CD4-positive, alpha-beta T cell (primary cell): ENCODE measurements at regions of chr17 and their contacts with region 1.

Region 1: DNA sequence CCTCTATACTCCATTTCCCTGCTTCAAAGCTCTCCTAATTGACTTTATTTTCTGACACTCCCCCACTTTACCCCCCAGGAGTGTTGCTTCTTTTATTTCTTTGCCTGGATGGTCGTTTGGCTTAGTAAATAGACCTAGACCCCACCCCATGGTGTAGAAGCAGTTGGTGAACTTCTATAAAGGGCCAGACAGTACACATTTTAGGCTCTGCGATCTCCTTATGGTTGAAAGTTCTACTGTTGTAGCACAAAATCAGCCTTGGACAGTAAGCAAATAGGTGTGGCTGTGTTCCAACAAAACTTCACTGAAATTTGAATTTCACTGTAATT is 31.9 kb downstream of the ZNF287 start:
- DNase-seq: peak in 1 of 14 experiments; percentile 21
- ATAC-seq: no peak
- H3K4me3 ChIP-seq: no peak overlapping the region
- H3K4me3 Mint-ChIP-seq: peak overlapping the region; percentile 93
- H3K27ac ChIP-seq: no peak overlapping the region
- H3K27ac Mint-ChIP-seq: peak overlapping the region; percentile 81
- H3K4me1 ChIP-seq: peaks cover 19% of the 10 kb centered on the region
- H3K4me1 Mint-ChIP-seq: peaks cover 13% of the 10 kb centered on the region
- H3K27me3 ChIP-seq: no peaks in the 10 kb centered on the region
- H3K27me3 Mint-ChIP-seq: no peaks in the 10 kb centered on the region
- CTCF ChIP-seq: no peak

Region 2: GRCh38 chr17:16215273-16215964 is 321.7 kb before region 1 on chr17 and contains the start of gene NCOR1:
- CTCF ChIA-PET with region 1: no interaction called
- POLR2A ChIA-PET with region 1: no interaction called
- intact Hi-C with region 1: loop called in 1 of 2 experiments (anchors 5 kb)
- DNase-seq: peak; percentile 79 to 95 (median 87)
- ATAC-seq: peak; percentile 87
- H3K4me3 ChIP-seq: peak within 1 kb of the TSS; percentile 73
- H3K4me3 Mint-ChIP-seq: peak within 1 kb of the TSS; percentile 100
- H3K27ac ChIP-seq: peak within 1 kb of the TSS; percentile 72 to 79
- H3K27ac Mint-ChIP-seq: peak within 1 kb of the TSS; percentile 99
- H3K4me1 ChIP-seq: peaks cover 36% of the 10 kb centered on the region
- H3K4me1 Mint-ChIP-seq: peaks cover 58% of the 10 kb centered on the region
- H3K27me3 ChIP-seq: no peaks in the 10 kb centered on the region
- H3K27me3 Mint-ChIP-seq: no peaks in the 10 kb centered on the region
- CTCF ChIP-seq: no peak
- total RNA-seq, gene NCOR1: 118 TPM

Region 3: DNA sequence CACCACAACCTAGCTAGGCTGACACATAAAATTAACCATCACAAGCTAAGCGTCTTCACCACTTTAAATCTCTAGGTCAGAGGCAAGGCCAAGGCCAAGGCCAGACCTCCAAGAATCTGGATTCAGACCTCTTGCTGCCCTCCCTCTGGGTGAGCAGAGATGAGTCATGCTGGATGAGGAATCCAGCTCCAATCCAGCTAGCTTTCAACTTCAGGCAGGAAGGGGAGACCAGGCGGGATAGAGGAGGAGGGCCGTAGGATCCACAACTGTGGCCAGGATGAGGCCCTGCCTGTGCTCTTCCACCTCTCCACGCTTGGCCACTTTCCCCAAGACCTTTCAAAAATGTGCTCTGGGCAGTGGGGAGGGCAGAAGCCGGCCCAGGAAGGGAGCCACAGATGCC is 59.8 kb before region 1 on chr17:
- CTCF ChIA-PET with region 1: no interaction called
- POLR2A ChIA-PET with region 1: no interaction called
- intact Hi-C with region 1: no loop called
- DNase-seq: no peak
- ATAC-seq: no peak
- H3K4me3 ChIP-seq: no peak overlapping the region
- H3K4me3 Mint-ChIP-seq: no peak overlapping the region
- H3K27ac ChIP-seq: no peak overlapping the region
- H3K27ac Mint-ChIP-seq: no peak overlapping the region
- H3K4me1 ChIP-seq: peaks cover 2% of the 10 kb centered on the region
- H3K4me1 Mint-ChIP-seq: no peaks in the 10 kb centered on the region
- H3K27me3 ChIP-seq: no peaks in the 10 kb centered on the region
- H3K27me3 Mint-ChIP-seq: no peaks in the 10 kb centered on the region
- CTCF ChIP-seq: no peak

Region 4: DNA sequence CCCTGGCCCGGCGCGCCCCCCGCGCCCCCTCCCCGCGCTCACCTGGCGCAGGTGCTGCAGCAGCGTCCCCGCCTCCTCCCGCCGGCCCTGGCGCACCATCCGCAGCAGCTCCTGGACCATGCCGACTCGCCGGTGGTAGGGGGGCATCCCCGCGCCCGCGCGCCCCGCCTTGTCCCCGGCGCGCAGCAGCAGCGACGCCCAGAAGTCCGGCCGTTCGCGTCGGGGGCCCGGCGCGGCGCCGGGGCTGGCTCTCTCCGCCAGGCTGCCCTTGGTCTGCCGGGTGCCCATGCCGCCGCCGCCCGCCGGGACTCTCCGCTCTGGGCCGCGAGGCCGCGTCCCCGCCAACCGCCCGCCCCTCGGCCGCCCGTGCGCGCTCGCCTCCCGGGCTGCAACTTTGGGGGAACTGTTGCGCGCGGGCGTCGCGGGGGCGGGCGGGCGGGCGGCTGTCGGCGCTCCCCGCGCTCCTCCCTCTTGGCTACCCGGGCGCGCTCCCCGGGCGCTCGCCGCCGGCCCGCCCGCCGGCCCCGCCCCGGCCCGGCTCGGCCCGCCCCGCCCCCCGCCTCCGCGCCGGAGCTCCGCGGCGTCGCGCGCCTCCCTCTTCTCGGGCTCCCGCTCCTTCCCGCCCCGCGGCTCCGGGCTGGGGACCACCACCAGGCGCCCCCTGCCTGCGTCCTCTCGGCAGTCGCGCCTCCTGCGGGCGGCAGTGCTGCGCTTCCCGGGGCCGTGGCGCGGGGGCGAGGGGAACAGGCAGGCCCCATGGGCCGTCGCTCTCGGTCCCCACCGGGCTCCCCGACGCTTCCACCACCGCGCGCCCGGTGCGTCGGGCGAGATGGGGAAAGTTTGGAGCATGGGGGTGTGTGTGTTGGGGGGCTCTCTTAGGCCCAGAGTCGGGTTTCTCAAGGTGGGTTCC is 45.1 kb before region 1 on chr17 and contains the start of gene LRRC75A:
- CTCF ChIA-PET with region 1: no interaction called
- POLR2A ChIA-PET with region 1: no interaction called
- intact Hi-C with region 1: loop called in 1 of 2 experiments (anchors 2 kb)
- DNase-seq: peak; percentile 17 to 83 (median 49)
- ATAC-seq: peak; percentile 87
- H3K4me3 ChIP-seq: peak within 1 kb of the TSS; percentile 51
- H3K4me3 Mint-ChIP-seq: peak within 1 kb of the TSS; percentile 89
- H3K27ac ChIP-seq: no peak within 1 kb of the TSS
- H3K27ac Mint-ChIP-seq: no peak within 1 kb of the TSS
- H3K4me1 ChIP-seq: peaks cover 17% of the 10 kb centered on the region
- H3K4me1 Mint-ChIP-seq: peaks cover 12% of the 10 kb centered on the region
- H3K27me3 ChIP-seq: peaks cover 0 to 5% of the 10 kb centered on the region in 2 experiments
- H3K27me3 Mint-ChIP-seq: no peaks in the 10 kb centered on the region
- CTCF ChIP-seq: no peak
- total RNA-seq, gene LRRC75A: 1.5 to 1.9 TPM

Region 5: DNA sequence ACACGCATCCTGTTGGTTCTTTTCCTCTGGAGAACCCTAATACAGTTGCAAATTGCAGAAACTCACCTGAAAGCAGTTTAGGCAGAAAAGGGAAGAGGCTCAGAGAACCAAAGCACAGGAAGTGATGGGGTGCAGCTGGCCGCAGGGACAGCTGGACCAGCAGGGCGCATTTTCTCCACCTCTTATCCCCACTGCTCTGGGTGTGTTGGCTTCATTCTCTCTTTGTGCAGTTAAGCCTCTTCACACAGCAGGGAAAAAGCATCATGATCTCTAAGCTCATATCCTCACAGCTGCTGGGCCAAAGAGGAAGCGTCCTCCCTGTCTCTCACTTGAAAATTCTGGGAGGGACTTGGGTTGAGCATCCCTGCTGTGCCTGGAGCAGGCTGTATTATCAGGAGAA is 25.1 kb before region 1 on chr17:
- CTCF ChIA-PET with region 1: no interaction called
- POLR2A ChIA-PET with region 1: no interaction called
- intact Hi-C with region 1: no loop called
- DNase-seq: no peak
- ATAC-seq: no peak
- H3K4me3 ChIP-seq: no peak overlapping the region
- H3K4me3 Mint-ChIP-seq: no peak overlapping the region
- H3K27ac ChIP-seq: no peak overlapping the region
- H3K27ac Mint-ChIP-seq: no peak overlapping the region
- H3K4me1 ChIP-seq: peaks cover 3% of the 10 kb centered on the region
- H3K4me1 Mint-ChIP-seq: no peaks in the 10 kb centered on the region
- H3K27me3 ChIP-seq: peaks cover 0 to 7% of the 10 kb centered on the region in 2 experiments
- H3K27me3 Mint-ChIP-seq: peaks cover 16% of the 10 kb centered on the region
- CTCF ChIP-seq: no peak

Region 6: DNA sequence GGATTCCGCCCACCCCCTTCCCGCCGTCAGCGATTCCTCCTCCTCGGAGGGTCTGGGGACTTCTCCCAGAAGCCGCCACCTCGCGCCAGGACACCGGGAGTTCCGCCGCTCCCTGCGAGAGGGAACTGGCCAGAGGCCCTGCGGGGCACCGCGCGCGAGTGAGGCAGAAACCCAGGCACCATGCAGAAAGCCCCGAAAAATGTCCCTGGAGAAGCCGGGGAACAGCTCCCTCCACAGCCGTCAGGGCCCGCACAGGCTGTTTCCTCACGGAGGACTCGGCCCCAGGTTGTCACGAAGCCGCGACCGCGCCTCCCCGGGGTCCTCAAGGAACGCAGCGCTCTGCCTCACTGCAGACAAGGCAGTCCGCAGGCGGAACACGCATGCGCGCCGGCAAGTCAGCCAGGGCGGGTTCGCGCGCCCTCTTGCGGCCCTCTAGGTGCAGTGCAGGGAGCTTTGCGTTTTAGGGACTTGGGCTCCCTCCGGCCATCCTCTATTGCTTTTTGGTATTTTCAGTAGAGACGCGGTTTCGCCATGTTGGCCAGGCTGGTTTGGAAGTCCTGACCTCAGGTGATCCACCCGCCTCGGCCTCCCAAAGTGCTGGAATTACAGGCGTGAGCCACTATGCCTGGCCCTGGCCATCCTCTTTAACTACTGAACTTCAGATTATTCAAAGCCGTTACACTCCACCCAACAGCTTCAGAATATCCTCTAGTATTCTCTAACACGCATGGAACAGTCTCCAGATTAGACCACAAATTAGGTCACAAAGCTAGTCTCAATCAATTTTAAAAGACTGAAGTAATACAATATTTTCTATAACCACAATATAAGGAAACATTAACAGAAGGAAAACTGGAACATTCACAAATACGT is 52.2 kb after region 1 on chr17:
- CTCF ChIA-PET with region 1: interaction called, 30 read pairs
- POLR2A ChIA-PET with region 1: interaction called, 19 read pairs
- intact Hi-C with region 1: loop called (anchors 1 kb)
- DNase-seq: peak; percentile 85 to 96 (median 92)
- ATAC-seq: peak; percentile 93
- H3K4me3 ChIP-seq: peak overlapping the region; percentile 63
- H3K4me3 Mint-ChIP-seq: peak overlapping the region; percentile 87
- H3K27ac ChIP-seq: no peak overlapping the region
- H3K27ac Mint-ChIP-seq: no peak overlapping the region
- H3K4me1 ChIP-seq: peaks cover 16% of the 10 kb centered on the region
- H3K4me1 Mint-ChIP-seq: peaks cover 4% of the 10 kb centered on the region
- H3K27me3 ChIP-seq: peaks cover 0 to 7% of the 10 kb centered on the region in 2 experiments
- H3K27me3 Mint-ChIP-seq: peaks cover 61% of the 10 kb centered on the region
- CTCF ChIP-seq: peak; percentile 99

Region 7: DNA sequence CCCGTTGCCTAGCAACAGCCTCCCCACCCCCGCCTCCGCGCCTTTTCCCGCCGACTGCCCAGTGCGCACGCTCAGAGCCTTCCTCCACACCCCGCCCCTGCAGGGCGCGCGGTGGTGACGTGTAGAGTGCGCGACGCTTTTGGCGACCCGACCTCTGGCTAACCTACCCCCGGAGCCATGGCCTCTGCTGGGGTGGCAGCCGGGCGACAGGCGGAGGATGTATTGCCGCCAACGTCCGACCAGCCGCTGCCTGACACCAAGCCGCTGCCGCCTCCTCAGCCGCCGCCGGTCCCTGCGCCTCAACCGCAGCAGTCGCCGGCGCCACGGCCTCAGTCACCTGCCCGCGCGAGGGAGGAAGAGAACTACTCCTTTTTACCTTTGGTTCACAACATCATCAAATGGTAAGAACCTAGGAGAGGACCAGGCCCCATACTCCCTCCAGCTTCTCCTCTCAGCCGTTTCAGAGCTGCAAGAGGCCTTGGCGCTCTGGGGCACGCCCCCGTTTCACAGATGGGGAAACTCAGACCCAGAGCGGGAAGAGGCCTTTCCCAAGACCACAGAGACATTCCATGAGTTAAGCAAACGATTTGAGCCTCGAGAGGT is 939.9 kb after region 1 on chr17 and contains the start of gene MED9:
- CTCF ChIA-PET with region 1: no interaction called
- POLR2A ChIA-PET with region 1: no interaction called
- intact Hi-C with region 1: loop called in 1 of 2 experiments (anchors 5 kb)
- DNase-seq: peak; percentile 92 to 98 (median 94)
- ATAC-seq: peak; percentile 98
- H3K4me3 ChIP-seq: peak within 1 kb of the TSS; percentile 82
- H3K4me3 Mint-ChIP-seq: peak within 1 kb of the TSS; percentile 91
- H3K27ac ChIP-seq: peak within 1 kb of the TSS; percentile 42 to 58
- H3K27ac Mint-ChIP-seq: peak within 1 kb of the TSS; percentile 87
- H3K4me1 ChIP-seq: peaks cover 42% of the 10 kb centered on the region
- H3K4me1 Mint-ChIP-seq: peaks cover 51% of the 10 kb centered on the region
- H3K27me3 ChIP-seq: peaks cover 0 to 2% of the 10 kb centered on the region in 2 experiments
- H3K27me3 Mint-ChIP-seq: peaks cover 6% of the 10 kb centered on the region
- CTCF ChIP-seq: no peak
- total RNA-seq, gene MED9: 27.0 to 27.9 TPM